CD8-positive, alpha-beta memory T cell (primary cell): ENCODE measurements at regions of chr19 and their contacts with region 1.

Region 1: DNA sequence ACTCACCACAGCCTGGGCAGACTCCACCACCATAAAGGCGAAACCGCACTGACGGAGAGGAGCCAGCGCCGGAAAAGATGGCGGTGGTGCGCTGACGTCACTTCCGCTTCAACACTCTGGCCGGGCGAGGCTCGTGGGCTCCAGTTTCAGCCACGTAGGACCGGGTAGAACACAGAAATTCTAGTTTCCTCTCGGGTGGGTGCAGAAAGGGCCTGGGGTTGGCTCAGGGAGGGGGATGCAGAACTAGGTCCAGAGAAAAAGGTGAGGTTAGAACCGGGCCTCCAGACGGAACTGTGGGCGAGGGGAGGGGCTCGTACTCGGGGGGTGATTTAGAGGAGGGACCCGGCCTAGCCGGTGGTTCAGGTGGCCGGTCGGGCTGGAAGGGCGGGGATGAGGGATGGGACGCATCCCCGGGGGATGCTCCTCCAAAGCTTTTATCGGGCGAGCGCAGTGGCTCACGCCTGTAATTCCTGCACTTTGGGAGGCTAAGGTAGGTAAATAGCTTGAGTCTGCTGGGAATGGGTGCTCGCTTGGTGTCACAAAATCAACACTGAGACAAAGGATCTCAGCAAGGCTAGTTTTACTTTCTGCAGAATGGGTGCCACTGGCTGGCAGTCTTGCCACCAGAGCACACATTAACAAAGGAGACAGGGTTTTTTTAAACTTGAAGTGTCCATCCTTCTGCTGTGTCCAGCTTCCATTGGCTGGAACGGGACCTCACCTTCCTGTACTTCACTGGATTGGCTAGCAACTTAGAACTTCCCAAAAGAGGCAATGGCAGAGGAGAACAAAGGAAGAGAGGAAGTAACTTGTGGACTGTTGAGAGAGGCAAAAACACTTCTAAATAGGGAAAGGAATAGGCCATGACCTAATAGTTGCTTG is at the start of gene ZNF561:
- DNase-seq: peak; percentile 85 to 94 (median 90)
- H3K4me3 ChIP-seq: peak within 1 kb of the TSS; percentile 83
- H3K4me3 Mint-ChIP-seq: peak within 1 kb of the TSS; percentile 94 to 100 (median 98)
- H3K27ac ChIP-seq: peak within 1 kb of the TSS; percentile 96
- H3K27ac Mint-ChIP-seq: peak within 1 kb of the TSS; percentile 99 to 100 (median 100)
- H3K4me1 ChIP-seq: peaks cover 22% of the 10 kb centered on the region
- H3K4me1 Mint-ChIP-seq: peaks cover 22 to 41% (median 25%) of the 10 kb centered on the region in 3 donors
- H3K27me3 ChIP-seq: no peaks in the 10 kb centered on the region
- H3K27me3 Mint-ChIP-seq: peaks cover 0 to 4% of the 10 kb centered on the region in 2 donors
- total RNA-seq, gene ZNF561: 35.9 to 43.5 TPM

Region 2: DNA sequence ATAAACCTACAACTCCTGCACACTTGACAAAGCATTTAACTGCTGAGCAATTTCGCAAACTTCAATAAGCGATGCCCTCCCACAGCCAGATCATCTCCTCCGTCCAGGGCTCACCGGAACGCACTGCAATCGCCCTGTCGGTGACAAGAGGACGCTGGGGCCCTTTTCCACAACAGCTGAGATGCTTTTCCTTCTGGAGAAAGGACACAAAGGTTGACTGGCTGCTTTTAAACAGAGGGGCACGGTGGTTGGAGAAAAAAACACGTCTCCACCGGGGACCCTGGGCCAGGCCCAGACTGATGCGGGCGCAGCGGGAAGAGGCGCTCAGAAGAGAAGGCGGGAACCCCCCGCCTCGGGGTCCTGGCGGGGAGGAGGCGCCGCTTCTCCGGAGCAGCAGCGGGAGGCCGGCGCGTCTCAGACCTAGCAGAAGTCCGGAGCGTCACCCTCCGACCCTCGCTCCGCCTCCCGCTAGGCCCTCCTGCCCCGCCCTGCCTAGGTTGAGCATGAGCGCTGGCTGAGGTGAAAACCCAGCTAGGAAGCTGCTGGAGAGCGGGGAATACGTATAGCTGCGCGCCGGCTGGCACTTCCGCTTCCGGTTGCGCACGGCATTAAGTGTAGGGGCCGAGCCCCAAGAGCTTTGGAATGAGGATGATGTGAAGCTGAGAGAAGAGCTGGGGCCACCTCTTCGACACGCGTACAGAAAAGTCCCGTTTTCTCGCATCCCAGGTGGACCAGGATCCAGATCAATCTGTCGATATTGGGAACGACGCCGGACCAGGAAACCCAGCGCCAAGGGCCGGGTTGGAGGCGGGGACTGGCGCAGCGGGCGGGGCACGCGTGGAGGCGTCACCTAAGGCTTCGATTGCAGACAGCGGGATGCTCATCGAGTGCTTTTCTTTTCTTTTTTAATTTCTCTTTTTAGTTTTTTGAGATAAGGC is 147.0 kb after region 1 on chr19 and contains the start of gene ZNF846:
- CTCF ChIA-PET with region 1: interaction called, 10 read pairs
- POLR2A ChIA-PET with region 1: interaction called, 4 read pairs
- DNase-seq: peak; percentile 84 to 94 (median 90)
- H3K4me3 ChIP-seq: peak within 1 kb of the TSS; percentile 87
- H3K4me3 Mint-ChIP-seq: peak within 1 kb of the TSS; percentile 97 to 100 (median 97)
- H3K27ac ChIP-seq: peak within 1 kb of the TSS; percentile 92
- H3K27ac Mint-ChIP-seq: peak within 1 kb of the TSS; percentile 99
- H3K4me1 ChIP-seq: peaks cover 11% of the 10 kb centered on the region
- H3K4me1 Mint-ChIP-seq: peaks cover 8 to 16% (median 9%) of the 10 kb centered on the region in 3 donors
- H3K27me3 ChIP-seq: no peaks in the 10 kb centered on the region
- H3K27me3 Mint-ChIP-seq: no peaks in the 10 kb centered on the region
- total RNA-seq, gene ZNF846: 5.1 to 5.9 TPM